Activated CD4-positive, alpha-beta T cell treated with anti-CD3 and anti-CD28 coated beads for 36 hours (primary cell): ENCODE measurements at regions of chr6 and their contacts with region 1.

Region 1: DNA sequence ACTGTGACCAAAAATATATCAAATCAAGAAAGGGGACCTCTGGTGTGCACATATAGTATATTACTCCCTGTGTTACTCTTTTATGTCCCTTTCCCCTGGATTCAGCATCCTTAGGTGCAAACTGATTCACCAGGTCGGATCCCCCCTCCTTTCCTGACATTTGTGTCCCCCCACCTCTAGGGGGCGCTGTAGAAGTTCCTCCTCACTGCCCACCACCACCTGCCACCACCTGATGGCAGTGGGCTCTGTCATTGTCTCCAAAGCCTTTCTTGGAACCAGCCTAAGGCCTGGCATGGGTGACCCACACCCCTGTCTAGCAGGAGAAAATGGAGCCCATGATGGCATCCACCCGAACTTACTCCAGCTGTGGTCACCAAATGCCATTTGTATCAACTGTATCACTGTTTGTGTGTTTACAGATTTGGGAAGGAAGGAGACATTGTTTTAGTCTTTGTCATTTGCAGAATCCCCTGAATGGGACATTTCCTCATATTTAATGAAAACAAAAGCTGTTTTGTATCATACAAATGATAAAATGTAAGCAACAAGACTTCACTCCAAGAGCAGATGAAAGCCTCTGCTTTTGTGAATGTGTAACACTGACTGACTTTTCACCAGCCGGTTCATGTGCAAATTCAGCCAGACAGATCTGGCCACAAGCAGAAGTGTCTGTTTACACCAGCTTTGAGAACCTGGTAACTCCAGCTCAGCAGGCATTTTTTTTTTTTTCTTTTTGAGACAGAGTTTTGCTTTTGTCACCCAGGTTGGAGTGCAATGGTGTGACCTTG is 66.2 kb downstream of the ARMC2 start:
- DNase-seq: peak; percentile 67
- ATAC-seq: peak; percentile 51
- H3K4me3 Mint-ChIP-seq: no peak overlapping the region
- H3K27ac Mint-ChIP-seq: no peak overlapping the region
- H3K4me1 Mint-ChIP-seq: no peaks in the 10 kb centered on the region
- H3K27me3 Mint-ChIP-seq: peaks cover 5% of the 10 kb centered on the region

Region 2: DNA sequence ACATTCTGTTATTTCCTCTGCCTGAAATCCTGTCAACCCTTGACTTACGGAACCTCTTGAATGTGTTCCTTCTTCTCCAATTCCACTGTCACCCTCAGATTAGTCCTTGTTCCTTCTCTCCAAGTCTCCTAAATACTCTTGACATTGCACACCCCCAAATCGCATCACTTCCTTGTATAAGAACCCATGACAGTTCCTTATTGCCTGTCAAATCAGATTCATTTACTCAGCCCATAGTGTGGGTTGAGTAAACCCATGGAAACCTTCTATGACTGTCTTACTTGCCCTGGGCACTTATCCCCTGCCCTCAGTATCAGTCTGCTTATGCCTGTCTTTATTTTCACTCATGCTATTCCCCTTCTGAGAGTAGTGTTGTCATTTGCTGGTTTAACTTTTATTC is 25.7 kb before region 1 on chr6:
- CTCF ChIA-PET with region 1: no interaction called
- POLR2A ChIA-PET with region 1: no interaction called
- intact Hi-C with region 1: no loop called
- DNase-seq: no peak
- ATAC-seq: peak; percentile 64
- H3K4me3 Mint-ChIP-seq: no peak overlapping the region
- H3K27ac Mint-ChIP-seq: no peak overlapping the region
- H3K4me1 Mint-ChIP-seq: peaks cover 14% of the 10 kb centered on the region
- H3K27me3 Mint-ChIP-seq: peaks cover 10% of the 10 kb centered on the region

Region 3: DNA sequence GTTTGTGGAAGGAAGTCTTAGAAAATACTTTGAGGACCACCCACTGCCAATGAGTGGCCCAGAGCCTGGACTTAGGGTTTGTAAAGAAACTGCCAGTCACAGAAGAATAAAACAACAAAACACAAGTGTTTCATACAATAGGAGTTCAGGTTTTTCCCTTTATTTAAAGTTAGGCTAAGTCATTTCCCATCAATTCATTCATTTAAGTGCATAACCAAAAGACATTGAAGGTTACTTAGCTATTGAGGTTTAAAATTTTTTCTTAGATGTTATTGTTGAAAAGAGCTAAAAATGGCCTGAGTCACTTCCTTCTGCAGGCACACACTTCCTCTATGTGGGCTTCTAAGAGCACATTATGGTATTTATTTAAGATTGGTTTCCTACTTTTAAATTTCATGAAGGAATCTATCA is 12.0 kb before region 1 on chr6:
- CTCF ChIA-PET with region 1: interaction called, 12 read pairs
- POLR2A ChIA-PET with region 1: no interaction called
- intact Hi-C with region 1: no loop called
- DNase-seq: no peak
- ATAC-seq: no peak
- H3K4me3 Mint-ChIP-seq: no peak overlapping the region
- H3K27ac Mint-ChIP-seq: peak overlapping the region; percentile 72
- H3K4me1 Mint-ChIP-seq: peaks cover 12% of the 10 kb centered on the region
- H3K27me3 Mint-ChIP-seq: no peaks in the 10 kb centered on the region